ENCODE measurements at regions of chr1 and their contacts with region 1.

Region 1: DNA sequence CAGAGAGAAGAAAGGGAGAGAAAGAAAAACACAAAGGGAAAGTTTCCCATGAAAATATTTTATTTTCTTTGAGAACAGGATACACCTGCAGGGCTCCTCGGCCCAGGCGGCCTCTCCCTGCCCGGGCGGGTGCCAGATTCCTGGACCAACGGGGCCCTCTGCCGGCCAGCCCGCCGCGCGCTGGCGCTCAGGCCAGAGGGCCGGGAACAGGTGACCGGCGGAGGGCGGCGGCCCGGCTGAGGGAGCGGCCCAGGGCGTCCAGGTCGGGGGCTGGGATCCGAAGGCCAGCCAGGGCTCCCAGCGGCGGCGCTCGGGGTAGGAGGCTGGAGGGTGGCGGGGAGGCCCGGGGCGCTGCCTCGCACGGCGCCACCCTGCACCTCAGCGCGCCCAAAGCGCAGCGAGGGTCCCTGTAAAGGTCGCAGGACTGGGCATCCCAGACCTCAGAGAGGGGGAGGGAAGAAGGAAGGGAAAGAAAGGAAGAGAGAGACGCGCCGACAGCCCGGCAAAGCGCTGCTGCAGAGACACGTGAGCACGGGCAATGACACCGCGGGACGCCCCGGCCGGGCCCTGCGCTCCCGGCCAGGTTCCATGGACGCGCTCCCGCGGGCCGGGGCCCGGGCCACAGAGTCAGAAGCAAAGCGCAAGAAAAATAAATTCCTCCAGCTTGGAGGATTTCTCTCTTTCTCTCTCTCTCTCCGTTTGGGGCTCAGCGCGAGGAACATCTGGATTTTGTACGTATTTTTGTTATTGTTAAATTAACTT is 927 bp downstream of the WNT9A start:
- DNase-seq: peak; percentile 67 to 86
- ATAC-seq: peak; percentile 82
- H3K4me3 ChIP-seq: peak overlapping the region in 1 of 2 donors; percentile 35
- H3K27ac ChIP-seq: no peak overlapping the region
- H3K4me1 ChIP-seq: no peaks in the 10 kb centered on the region
- H3K27me3 ChIP-seq: no peaks in the 10 kb centered on the region

Region 2: DNA sequence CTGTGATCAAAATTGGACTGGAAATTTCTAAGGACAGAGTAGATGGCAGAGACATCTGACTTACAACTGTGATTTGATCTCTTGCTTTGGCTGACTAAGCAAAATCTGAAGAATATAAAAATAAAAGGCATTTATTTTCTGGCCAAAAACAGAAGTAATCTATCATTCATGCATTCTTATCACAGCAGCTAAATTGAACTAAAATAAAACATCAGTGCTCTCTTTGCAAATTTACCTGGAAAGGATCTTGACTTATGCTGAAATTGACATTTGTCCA is 464.8 kb before region 1 on chr1:
- intact Hi-C with region 1: loop called (anchors 5 kb)
- DNase-seq: no peak
- ATAC-seq: no peak
- H3K4me3 ChIP-seq: no peak overlapping the region
- H3K27ac ChIP-seq: no peak overlapping the region
- H3K4me1 ChIP-seq: no peaks in the 10 kb centered on the region
- H3K27me3 ChIP-seq: no peaks in the 10 kb centered on the region

Region 3: DNA sequence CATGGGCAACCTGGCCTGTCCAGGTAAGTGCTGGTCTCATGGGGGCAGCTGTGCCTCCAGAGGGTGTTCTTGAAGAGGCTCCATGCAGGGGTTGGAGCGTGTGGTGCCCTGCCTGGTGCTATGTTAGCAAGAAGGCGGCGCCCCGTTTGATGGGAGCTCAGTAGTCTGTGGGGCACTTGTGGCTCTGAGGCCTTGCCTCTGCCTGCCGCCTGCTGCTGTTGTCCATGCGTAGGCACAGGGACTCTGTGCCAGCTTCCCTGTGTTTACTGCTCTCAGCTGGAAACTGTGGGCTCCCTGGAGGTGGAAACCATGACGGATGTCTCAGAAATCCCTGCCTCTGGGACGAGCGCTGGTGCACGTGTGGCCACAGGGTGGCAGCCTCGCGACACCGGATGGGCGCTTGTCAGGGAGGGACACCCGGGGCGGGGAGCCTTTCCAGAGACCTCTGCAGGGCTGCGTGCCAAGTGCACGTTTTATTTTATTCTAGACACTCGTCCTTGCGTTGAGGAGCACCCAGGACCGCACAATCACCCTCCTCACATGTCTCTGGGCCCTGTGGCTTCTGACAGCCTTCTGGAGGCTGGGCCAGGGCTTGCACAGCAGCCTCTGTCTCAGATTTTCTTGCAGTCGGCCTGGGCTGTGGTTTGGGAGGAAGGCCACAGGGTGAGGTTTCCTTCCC is 184.4 kb before region 1 on chr1:
- intact Hi-C with region 1: loop called (anchors 1 to 5 kb)
- DNase-seq: peak; percentile 84 to 94
- ATAC-seq: peak; percentile 86
- H3K4me3 ChIP-seq: no peak overlapping the region
- H3K27ac ChIP-seq: no peak overlapping the region
- H3K4me1 ChIP-seq: no peaks in the 10 kb centered on the region
- H3K27me3 ChIP-seq: no peaks in the 10 kb centered on the region

Region 4: DNA sequence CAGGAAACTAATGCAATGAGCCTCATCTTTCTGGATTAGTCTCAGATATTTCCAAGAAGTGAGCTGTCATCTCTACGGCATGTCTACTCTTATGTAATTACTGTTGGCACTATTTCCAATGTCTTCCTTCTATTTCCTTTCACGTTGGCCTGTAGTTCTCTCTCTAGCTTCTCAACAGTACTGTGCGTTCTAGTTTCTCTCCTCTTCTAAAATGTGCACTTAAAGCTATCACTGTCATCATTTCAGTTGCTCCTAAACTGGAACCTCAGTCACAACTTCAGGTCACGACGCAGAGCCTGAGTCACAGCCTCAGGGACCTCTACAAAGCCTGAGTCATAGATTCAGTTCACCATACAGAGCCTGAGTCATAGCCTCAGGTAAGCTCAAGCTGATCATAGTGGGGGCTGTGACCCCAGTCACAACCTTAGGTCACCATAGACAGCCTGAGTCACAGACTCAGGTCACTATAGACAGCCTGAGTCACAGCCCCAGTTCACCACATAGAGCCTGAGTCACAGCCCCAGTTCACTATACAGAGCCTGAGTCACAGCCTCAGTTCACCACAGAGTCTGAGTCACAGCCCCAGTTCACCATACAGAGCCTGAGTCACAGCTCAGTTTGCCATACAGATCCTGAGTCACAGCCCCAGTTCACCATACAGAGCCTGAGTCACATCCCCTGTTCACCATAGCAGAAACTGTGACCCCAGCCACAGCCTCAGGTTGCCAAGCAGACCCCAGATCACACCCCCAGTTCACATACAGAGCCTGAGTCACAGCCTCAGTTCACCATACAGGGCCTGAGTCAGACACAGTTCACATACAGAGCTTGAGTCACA is 12.1 kb before region 1 on chr1:
- intact Hi-C with region 1: no loop called
- DNase-seq: peak; percentile 45 to 65
- ATAC-seq: peak; percentile 43
- H3K4me3 ChIP-seq: no peak overlapping the region
- H3K27ac ChIP-seq: no peak overlapping the region
- H3K4me1 ChIP-seq: no peaks in the 10 kb centered on the region
- H3K27me3 ChIP-seq: no peaks in the 10 kb centered on the region